SK-N-SH (cell line): ENCODE measurements at regions of chr2 and their contacts with region 1.

Region 1: DNA sequence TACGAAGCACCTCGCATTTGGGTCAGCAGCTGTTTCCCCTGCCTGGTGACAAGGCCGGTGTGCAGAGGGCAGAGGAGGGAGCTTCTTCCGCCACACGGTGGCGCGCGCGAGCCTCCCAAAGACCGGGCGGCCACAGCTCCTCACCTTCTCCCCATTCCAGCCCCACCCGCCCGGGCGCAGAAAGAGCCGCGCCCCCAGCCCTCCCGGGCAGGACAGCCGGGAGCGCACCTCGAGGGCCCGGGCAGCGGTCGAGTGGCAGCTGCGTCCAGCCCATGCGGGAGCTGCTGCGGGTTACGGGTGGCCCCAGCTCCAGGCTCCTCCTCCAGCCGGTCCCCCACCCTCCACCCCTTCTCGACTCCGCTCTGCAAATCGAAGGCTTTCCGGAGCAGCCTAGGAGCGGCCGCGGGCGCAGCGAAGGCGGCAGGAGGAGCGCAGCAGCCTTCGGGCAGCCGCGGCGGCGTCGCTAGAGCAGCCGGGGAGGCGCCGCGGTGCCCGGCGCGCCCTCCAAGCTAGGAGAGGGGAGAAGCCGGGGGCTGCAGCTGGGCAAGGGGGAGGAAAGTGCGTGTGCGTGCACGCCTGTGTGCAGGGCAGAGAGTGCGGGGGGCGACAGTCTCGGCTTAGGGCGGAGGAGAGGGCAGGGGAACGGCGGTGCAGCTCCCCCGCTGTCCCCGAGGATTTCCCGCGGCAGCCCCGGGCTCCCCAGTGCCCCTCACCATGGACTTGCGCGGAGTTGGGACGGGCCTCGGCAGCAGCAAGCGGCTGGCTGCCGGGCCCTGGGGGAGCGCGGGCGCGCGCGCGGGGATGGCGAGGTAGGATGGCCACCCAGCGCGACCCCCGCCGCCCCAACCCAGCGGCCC is at the start of gene CCDC85A:
- DNase-seq: peak; percentile 87
- H3K4me3 ChIP-seq: peak within 1 kb of the TSS; percentile 75 to 86
- H3K27ac ChIP-seq: peak within 1 kb of the TSS; percentile 40 to 79
- H3K4me1 ChIP-seq: peaks cover 0 to 14% of the 10 kb centered on the region in 2 experiments; a peak in 2 of 4 replicates
- H3K27me3 ChIP-seq: no peaks in the 10 kb centered on the region
- CTCF ChIP-seq: peak; percentile 89
- EP300 ChIP-seq: peak in 1 of 2 experiments; percentile 34; a peak in 1 of 4 replicates
- RAD21 ChIP-seq: peak; percentile 71
- polyA plus RNA-seq, gene CCDC85A: 48.7 and 49.9 TPM in 2 replicates

Region 2: GRCh38 chr2:56151841-56152240 is 32.0 kb before region 1 on chr2:
- CTCF ChIA-PET with region 1: interaction called, 11 read pairs
- POLR2A ChIA-PET with region 1: no interaction called
- DNase-seq: no peak
- H3K4me3 ChIP-seq: no peak overlapping the region
- H3K27ac ChIP-seq: no peak overlapping the region
- H3K4me1 ChIP-seq: no peaks in the 10 kb centered on the region
- H3K27me3 ChIP-seq: no peaks in the 10 kb centered on the region
- CTCF ChIP-seq: no peak
- EP300 ChIP-seq: no peak
- RAD21 ChIP-seq: no peak

Region 3: DNA sequence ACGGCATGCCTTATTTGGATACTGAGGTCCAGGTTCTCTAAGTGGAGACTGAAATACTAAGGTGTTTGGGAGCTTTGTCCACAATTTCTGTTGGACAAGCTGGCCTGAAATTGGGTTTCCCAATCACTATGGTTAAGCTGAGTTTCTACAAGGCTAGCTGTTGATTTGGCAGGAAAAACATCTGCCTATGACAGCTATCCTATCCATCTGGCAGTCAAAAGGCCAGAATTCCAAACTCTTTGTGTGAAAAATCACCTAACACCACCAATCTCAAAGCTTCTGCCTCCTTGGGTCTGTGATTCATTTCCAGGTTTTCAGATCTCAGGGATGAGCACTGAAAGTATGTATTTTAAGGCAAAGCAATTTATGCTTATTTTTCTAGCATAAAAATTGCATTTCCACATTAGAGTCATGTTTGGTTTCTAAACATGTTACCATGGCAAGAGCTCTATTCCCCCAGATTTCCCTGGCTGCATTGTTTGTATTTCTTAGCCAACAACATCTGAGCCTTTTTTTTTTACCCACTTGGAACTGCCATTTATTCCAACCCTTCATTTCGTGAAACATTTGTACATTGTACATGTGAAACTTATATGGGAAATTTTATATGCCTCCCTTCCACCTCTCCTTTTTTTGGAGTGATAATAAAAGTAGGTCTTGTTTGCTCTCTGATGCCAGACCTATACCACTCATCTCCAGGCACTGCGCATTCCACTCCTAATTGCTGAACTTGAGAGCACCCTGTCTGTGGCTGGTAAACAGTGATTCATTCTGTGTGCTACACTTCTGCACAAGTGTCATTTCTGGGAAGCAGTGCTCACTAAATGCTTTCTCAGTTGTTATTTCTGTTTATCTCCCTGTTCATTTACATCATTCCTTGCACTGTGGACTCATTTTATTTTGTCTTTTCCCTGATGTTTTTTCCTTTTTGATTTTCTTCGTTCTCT is 16.0 kb before region 1 on chr2:
- CTCF ChIA-PET with region 1: interaction called, 17 read pairs
- POLR2A ChIA-PET with region 1: no interaction called
- DNase-seq: no peak
- H3K4me3 ChIP-seq: no peak overlapping the region
- H3K27ac ChIP-seq: peak overlapping the region; percentile 33 to 34; a peak in 3 of 4 replicates
- H3K4me1 ChIP-seq: no peaks in the 10 kb centered on the region
- H3K27me3 ChIP-seq: no peaks in the 10 kb centered on the region
- CTCF ChIP-seq: no peak
- EP300 ChIP-seq: no peak
- RAD21 ChIP-seq: no peak

Region 4: DNA sequence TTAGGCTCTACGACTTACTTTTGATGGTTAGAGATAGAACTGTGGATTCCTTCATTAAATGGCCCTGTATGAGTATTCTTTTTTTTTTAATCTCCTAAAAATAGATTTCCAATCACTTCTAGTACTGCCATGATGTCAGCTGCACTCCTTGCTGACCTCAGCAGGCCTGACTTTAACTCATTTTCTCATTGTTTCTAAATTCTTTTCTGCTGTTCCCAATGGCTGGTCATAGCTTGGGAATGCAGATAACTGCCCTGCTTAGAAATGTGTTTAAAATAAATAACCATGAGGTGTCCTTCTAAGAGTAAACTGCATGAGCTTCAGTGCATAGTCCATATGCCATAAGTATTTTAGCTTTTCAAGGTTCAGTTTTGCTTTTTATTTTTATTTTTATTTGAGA is 15.6 kb after region 1 on chr2:
- CTCF ChIA-PET with region 1: interaction called, 20 read pairs
- POLR2A ChIA-PET with region 1: no interaction called
- DNase-seq: no peak
- H3K4me3 ChIP-seq: no peak overlapping the region
- H3K27ac ChIP-seq: peak overlapping the region in 1 of 2 experiments; percentile 79; a peak in 2 of 4 replicates
- H3K4me1 ChIP-seq: peaks cover 0 to 18% of the 10 kb centered on the region in 2 experiments; a peak in 2 of 4 replicates
- H3K27me3 ChIP-seq: no peaks in the 10 kb centered on the region
- CTCF ChIP-seq: no peak
- EP300 ChIP-seq: peak in 1 of 2 experiments; percentile 53; a peak in 1 of 4 replicates
- RAD21 ChIP-seq: no peak

Region 5: DNA sequence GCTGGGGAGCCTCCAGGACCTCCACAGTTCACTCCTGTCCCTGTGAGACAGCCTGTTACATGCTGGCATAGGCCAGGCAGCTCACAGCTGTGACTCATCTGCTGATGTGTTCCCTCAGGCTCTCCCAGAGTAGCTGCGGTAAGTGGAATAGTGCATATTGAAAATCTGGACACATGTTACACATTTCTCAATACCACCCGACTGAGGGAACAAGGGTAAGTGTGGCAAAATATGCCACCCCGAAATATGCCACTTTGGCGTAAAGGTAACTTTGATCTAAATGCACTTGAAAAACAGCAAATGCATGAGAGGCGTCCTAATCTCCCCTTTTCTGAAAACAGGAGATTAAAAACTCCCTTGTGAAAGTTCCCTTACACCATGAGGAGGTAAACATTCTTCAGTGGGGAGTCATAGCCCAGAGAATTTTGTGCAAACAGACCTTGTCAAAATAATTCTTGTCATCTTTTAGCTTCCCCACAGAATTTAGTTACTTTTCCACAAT is 557.8 kb after region 1 on chr2:
- CTCF ChIA-PET with region 1: interaction called, 14 read pairs
- POLR2A ChIA-PET with region 1: no interaction called
- DNase-seq: peak; percentile 0
- H3K4me3 ChIP-seq: peak overlapping the region; percentile 21 to 37; a peak in 2 of 4 replicates
- H3K27ac ChIP-seq: peak overlapping the region; percentile 87 to 98
- H3K4me1 ChIP-seq: peaks cover 0 to 19% of the 10 kb centered on the region in 2 experiments
- H3K27me3 ChIP-seq: no peaks in the 10 kb centered on the region
- CTCF ChIP-seq: no peak
- EP300 ChIP-seq: peak in 1 of 2 experiments; percentile 88; a peak in 2 of 4 replicates
- RAD21 ChIP-seq: no peak

Region 6: GRCh38 chr2:56749152-56749752 is 565.4 kb after region 1 on chr2:
- CTCF ChIA-PET with region 1: interaction called, 20 read pairs
- POLR2A ChIA-PET with region 1: no interaction called
- DNase-seq: no peak
- H3K4me3 ChIP-seq: no peak overlapping the region
- H3K27ac ChIP-seq: no peak overlapping the region; a peak in 1 of 4 replicates
- H3K4me1 ChIP-seq: peaks cover 0 to 6% of the 10 kb centered on the region in 2 experiments; a peak in 2 of 4 replicates
- H3K27me3 ChIP-seq: no peaks in the 10 kb centered on the region
- CTCF ChIP-seq: peak; percentile 62
- EP300 ChIP-seq: no peak
- RAD21 ChIP-seq: peak; percentile 60

Region 7: DNA sequence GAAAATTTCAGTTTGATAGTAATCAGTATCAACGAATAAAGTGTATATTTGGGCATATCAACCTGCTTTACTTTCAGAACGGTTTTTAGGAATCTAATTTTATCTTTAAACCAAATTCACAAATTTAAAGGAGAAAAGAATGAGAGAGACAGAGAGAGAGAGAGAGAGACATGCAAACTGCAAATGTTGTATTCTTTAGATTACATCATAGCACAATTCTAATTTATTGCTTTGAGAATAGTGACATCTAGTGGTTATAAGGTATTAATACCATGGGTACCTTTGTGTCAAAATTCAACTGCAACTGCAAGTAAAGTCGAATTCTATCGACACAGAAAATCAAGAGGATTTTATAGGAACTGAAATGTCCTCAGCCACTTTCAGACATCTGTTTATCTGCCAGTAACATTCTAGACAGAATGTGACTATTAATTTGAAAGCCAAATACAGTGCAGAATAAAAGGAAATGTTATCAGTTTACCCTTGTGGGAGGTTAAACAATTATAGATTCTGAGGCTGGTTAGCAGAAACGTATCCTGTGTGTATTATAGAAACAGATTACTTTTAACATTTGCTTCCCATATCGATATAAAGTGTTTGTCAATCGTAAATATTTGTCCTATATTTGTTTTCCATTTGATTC is 1332.9 kb after region 1 on chr2:
- CTCF ChIA-PET with region 1: interaction called, 13 read pairs
- POLR2A ChIA-PET with region 1: no interaction called
- DNase-seq: peak; percentile 19
- H3K4me3 ChIP-seq: peak overlapping the region in 1 of 2 experiments; percentile 20; a peak in 1 of 4 replicates
- H3K27ac ChIP-seq: no peak overlapping the region
- H3K4me1 ChIP-seq: no peaks in the 10 kb centered on the region
- H3K27me3 ChIP-seq: no peaks in the 10 kb centered on the region
- CTCF ChIP-seq: peak; percentile 69
- EP300 ChIP-seq: no peak
- RAD21 ChIP-seq: peak; percentile 76